Sigmoid colon (tissue), 7 donors: ENCODE measurements at regions of chr12 and their contacts with region 1.

Region 1: GRCh38 chr12:88141770-88142609 is at the starts of genes CEP290 and TMTC3:
- DNase-seq: peak; percentile 97
- H3K4me3 ChIP-seq: peak within 1 kb of the TSS; percentile 60 to 72 (median 66)
- H3K27ac ChIP-seq: peak within 1 kb of the TSS; percentile 74 to 81 (median 78)
- H3K4me1 ChIP-seq: peaks cover 0 to 33% (median 16%) of the 10 kb centered on the region in 4 donors
- H3K27me3 ChIP-seq: no peaks in the 10 kb centered on the region
- CTCF ChIP-seq: no peak
- EP300 ChIP-seq: peak in 1 of 4 donors; percentile 10
- POLR2A ChIP-seq: peak; percentile 43 to 66
- total RNA-seq, gene CEP290: 14.1 to 17.5 (median 15.9) TPM
- total RNA-seq, gene TMTC3: 14.4 to 22.2 (median 20.7) TPM

Region 2: GRCh38 chr12:88035271-88035906 is 106.6 kb before region 1 on chr12:
- intact Hi-C with region 1: loop called (anchors 5 kb)
- DNase-seq: peak; percentile 93
- H3K4me3 ChIP-seq: peak overlapping the region; percentile 54 to 83 (median 64)
- H3K27ac ChIP-seq: peak overlapping the region; percentile 74 to 84 (median 82)
- H3K4me1 ChIP-seq: peaks cover 0 to 42% (median 26%) of the 10 kb centered on the region in 4 donors
- H3K27me3 ChIP-seq: no peaks in the 10 kb centered on the region
- CTCF ChIP-seq: no peak
- EP300 ChIP-seq: no peak
- POLR2A ChIP-seq: peak; percentile 73 to 84

Region 3: GRCh38 chr12:88242571-88242925 is 100.6 kb after region 1 on chr12:
- intact Hi-C with region 1: no loop called
- DNase-seq: no peak
- H3K4me3 ChIP-seq: no peak overlapping the region
- H3K27ac ChIP-seq: peak overlapping the region in 3 of 4 donors; percentile 53 to 68 (median 53)
- H3K4me1 ChIP-seq: peaks cover 0 to 27% (median 13%) of the 10 kb centered on the region in 4 donors
- H3K27me3 ChIP-seq: no peaks in the 10 kb centered on the region
- CTCF ChIP-seq: no peak
- EP300 ChIP-seq: no peak
- POLR2A ChIP-seq: no peak

Region 4: GRCh38 chr12:88325076-88325815 is 183.3 kb after region 1 on chr12:
- intact Hi-C with region 1: loop called (anchors 5 kb)
- DNase-seq: no peak
- H3K4me3 ChIP-seq: no peak overlapping the region
- H3K27ac ChIP-seq: peak overlapping the region; percentile 55 to 78 (median 65)
- H3K4me1 ChIP-seq: peaks cover 0 to 42% (median 25%) of the 10 kb centered on the region in 4 donors
- H3K27me3 ChIP-seq: no peaks in the 10 kb centered on the region
- CTCF ChIP-seq: no peak
- EP300 ChIP-seq: no peak
- POLR2A ChIP-seq: no peak

Region 5: DNA sequence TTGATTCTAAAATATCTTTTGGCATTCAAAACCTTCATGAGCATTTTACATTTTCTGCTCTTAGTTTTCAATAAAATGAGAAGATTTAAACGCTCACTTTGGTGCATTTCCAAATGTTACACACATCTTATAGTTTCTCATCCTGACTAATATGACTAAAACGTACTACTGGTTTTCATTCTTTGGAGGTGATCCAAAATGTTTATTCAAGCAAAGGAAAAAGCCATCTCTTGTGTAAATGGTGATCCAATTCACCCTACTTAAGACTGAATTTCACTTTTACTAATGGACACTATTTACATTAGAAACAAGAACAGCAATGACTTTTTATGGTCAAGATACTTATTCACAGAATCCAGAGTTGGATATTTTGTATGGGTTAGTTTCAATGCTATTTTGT is 351.6 kb after region 1 on chr12:
- intact Hi-C with region 1: loop called (anchors 10 kb)
- DNase-seq: no peak
- H3K4me3 ChIP-seq: no peak overlapping the region
- H3K27ac ChIP-seq: no peak overlapping the region
- H3K4me1 ChIP-seq: peaks cover 0 to 34% (median 29%) of the 10 kb centered on the region in 4 donors
- H3K27me3 ChIP-seq: no peaks in the 10 kb centered on the region
- CTCF ChIP-seq: no peak
- EP300 ChIP-seq: no peak
- POLR2A ChIP-seq: no peak

Region 6: DNA sequence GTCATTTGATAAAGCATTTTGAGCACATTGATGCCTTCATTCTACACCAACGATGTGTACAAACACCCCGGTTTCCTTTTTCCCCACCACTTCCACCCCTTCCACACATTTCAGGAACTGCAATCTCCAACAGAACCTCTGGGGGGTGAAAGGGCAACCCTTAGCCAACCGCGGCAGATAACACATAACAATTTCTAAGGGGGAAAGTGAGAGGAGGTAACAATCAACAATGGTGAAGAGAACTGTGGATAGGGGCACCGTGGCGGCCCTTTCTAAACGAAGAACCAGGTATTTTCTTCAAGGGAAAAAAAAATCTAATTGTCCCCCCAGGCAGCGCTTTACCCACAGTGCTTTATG is 437.1 kb after region 1 on chr12:
- intact Hi-C with region 1: loop called (anchors 5 kb)
- DNase-seq: no peak
- H3K4me3 ChIP-seq: peak overlapping the region; percentile 60 to 81 (median 66)
- H3K27ac ChIP-seq: peak overlapping the region; percentile 77 to 86 (median 85)
- H3K4me1 ChIP-seq: peaks cover 0 to 44% (median 34%) of the 10 kb centered on the region in 4 donors
- H3K27me3 ChIP-seq: no peaks in the 10 kb centered on the region
- CTCF ChIP-seq: peak; percentile 23 to 66 (median 60)
- EP300 ChIP-seq: no peak
- POLR2A ChIP-seq: no peak

Region 7: DNA sequence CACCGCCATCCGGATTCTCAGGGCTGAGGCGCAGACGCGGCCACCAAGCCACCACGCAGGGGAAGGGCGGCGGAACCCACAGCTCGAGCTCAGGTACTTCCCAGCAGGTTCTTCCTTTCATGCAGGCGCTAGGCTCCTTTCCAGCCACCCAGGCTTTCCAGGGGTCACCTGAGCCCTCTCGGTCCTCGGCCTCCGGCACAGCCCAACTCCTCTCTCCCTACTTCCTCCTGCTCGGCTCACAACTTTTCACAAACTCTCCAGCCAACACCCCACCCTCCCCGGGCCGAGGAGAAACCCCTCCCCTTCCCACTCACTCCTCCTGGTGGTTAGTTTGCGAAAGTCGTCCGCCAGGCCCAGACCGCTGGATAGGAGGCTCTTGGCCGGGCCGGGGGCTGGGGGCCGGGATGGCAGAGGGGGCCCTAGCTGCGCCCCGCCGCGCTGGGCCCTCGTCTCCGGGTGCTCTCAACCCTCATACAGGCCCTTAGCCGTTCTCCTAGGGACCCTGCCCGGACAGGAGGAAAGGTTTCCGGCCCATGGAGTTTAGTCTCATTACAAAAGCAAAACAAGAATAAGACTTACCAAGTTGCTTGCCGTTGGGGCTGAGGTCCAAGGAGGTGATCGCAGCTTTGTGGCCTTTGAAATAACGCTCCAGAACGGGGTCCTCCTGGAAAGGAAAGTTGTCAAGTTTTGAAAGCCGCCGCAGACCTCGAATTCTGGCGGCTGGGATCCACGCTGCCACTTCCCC is 1382.7 kb after region 1 on chr12 and contains the start of gene GALNT4:
- intact Hi-C with region 1: loop called (anchors 10 kb)
- DNase-seq: peak; percentile 93
- H3K4me3 ChIP-seq: peak within 1 kb of the TSS; percentile 74 to 95 (median 94)
- H3K27ac ChIP-seq: peak within 1 kb of the TSS; percentile 87 to 92 (median 90)
- H3K4me1 ChIP-seq: peaks cover 0 to 56% (median 35%) of the 10 kb centered on the region in 4 donors
- H3K27me3 ChIP-seq: no peaks in the 10 kb centered on the region
- CTCF ChIP-seq: peak; percentile 58 to 87 (median 80)
- EP300 ChIP-seq: no peak
- POLR2A ChIP-seq: peak; percentile 40 to 63
- total RNA-seq, gene GALNT4: 3.4 to 4.8 (median 4.3) TPM